Activated CD8-positive, alpha-beta T cell treated with anti-CD3 and anti-CD28 coated beads for 36 hours (primary cell): ENCODE measurements at regions of chr15 and their contacts with region 1.

Region 1: DNA sequence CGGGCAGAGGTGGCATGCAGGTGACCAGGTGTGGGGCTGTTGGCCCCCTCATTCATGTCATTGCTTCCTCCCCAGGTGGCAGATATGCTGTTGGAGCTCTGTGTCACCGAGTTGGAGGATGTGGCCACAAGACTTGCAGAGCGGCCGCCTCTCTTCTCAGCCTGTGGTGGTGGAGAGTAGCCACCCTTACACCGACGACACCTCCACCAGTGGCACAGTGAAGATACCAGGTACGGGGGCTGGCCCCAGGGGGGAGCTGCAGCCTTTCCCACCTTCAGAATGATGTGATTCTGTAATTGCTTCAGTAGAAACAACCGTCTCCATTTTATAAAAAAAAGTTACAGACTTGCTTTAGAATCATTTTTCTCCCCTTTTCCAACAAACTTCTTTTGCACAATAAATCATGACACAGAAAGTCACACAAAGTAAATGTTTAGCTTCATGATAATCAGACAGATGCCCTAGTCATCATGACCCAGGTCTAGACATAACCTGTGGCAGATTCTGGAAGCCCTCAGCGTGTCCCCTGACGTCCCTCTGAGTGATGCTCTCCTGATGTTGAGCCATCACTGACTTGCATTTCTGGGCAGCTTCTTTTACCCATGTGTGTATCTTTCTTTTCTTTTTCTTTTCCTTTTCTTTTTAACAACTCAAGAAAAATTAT is 76.0 kb upstream of the FAN1 start:
- DNase-seq: no peak
- ATAC-seq: peak; percentile 19
- H3K4me3 Mint-ChIP-seq: no peak overlapping the region
- H3K27ac Mint-ChIP-seq: no peak overlapping the region
- H3K4me1 Mint-ChIP-seq: peaks cover 2% of the 10 kb centered on the region
- H3K27me3 Mint-ChIP-seq: no peaks in the 10 kb centered on the region
- CTCF ChIP-seq: no peak

Region 2: GRCh38 chr15:30791239-30792175 is 36.2 kb before region 1 on chr15:
- CTCF ChIA-PET with region 1: no interaction called
- POLR2A ChIA-PET with region 1: no interaction called
- intact Hi-C with region 1: no loop called
- DNase-seq: peak; percentile 28
- ATAC-seq: no peak
- H3K4me3 Mint-ChIP-seq: no peak overlapping the region
- H3K27ac Mint-ChIP-seq: no peak overlapping the region
- H3K4me1 Mint-ChIP-seq: no peaks in the 10 kb centered on the region
- H3K27me3 Mint-ChIP-seq: peaks cover 6% of the 10 kb centered on the region
- CTCF ChIP-seq: no peak

Region 3: DNA sequence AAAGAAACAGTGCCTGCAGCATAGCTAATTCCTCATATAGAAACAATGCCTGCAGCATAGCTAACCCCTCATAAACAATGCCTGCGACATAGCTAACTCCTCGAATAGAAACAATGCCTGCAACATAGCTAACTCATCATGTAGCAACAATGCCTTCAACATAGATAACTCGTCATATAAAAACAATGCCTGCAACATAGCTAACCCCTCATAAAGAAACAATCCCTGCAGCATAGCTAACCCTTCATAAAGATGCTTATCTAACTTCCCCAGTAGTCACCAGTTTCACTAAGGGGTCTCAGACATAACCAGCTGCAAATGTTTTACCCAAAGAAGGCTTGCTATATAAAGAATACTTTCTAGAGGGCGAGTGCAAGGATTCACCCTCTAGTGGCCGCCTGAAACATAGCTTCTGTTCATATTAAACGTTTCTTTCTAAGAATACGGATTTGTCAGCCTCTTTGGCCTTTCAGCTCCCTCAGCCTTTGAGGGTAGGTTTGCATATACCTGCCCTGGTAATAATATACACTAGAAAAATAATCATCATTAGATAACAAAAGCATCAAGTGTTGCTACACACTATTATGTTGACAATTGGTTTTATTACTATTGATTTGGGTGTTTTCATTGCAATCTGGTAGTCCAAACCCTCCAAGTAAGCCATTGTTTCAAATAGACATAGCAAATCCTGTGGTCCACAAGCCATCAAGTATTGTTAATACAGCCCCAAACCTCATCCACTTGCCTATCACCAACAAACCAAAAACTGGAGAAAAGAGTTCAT is 31.5 kb after region 1 on chr15:
- CTCF ChIA-PET with region 1: interaction called, 13 read pairs
- POLR2A ChIA-PET with region 1: no interaction called
- intact Hi-C with region 1: no loop called
- DNase-seq: peak; percentile 10
- ATAC-seq: peak; percentile 47
- H3K4me3 Mint-ChIP-seq: no peak overlapping the region
- H3K27ac Mint-ChIP-seq: no peak overlapping the region
- H3K4me1 Mint-ChIP-seq: no peaks in the 10 kb centered on the region
- H3K27me3 Mint-ChIP-seq: no peaks in the 10 kb centered on the region
- CTCF ChIP-seq: peak; percentile 64

Region 4: GRCh38 chr15:31013538-31014228 is 185.9 kb after region 1 on chr15:
- CTCF ChIA-PET with region 1: no interaction called
- POLR2A ChIA-PET with region 1: no interaction called
- intact Hi-C with region 1: no loop called
- DNase-seq: no peak
- ATAC-seq: peak; percentile 68
- H3K4me3 Mint-ChIP-seq: no peak overlapping the region
- H3K27ac Mint-ChIP-seq: peak overlapping the region; percentile 57
- H3K4me1 Mint-ChIP-seq: peaks cover 17% of the 10 kb centered on the region
- H3K27me3 Mint-ChIP-seq: no peaks in the 10 kb centered on the region
- CTCF ChIP-seq: no peak